HEK293 (cell line): ENCODE measurements at regions of chr2 and their contacts with region 1.

Region 1: GRCh38 chr2:219530048-219530963 is 13.3 kb downstream of the CHPF start:
- H3K4me3 ChIP-seq: no peak overlapping the region
- H3K27ac ChIP-seq: no peak overlapping the region
- H3K4me1 ChIP-seq: no peaks in the 10 kb centered on the region
- CTCF ChIP-seq: peak; percentile 95

Region 2: GRCh38 chr2:219160186-219161017 is 369.9 kb before region 1 on chr2 and contains the start of gene NHEJ1:
- CTCF ChIA-PET with region 1: interaction called, 18 read pairs
- POLR2A ChIA-PET with region 1: no interaction called
- H3K4me3 ChIP-seq: peak within 1 kb of the TSS; percentile 83
- H3K27ac ChIP-seq: peak within 1 kb of the TSS; percentile 97
- H3K4me1 ChIP-seq: peaks cover 5% of the 10 kb centered on the region; the same call in 1 of the 2 replicates
- CTCF ChIP-seq: peak; percentile 96

Region 3: GRCh38 chr2:219441451-219442255 is 88.7 kb before region 1 on chr2:
- CTCF ChIA-PET with region 1: interaction called, 24 read pairs
- POLR2A ChIA-PET with region 1: no interaction called
- H3K4me3 ChIP-seq: peak overlapping the region; percentile 55
- H3K27ac ChIP-seq: no peak overlapping the region; the same call in 1 of the 2 replicates
- H3K4me1 ChIP-seq: no peaks in the 10 kb centered on the region
- CTCF ChIP-seq: peak; percentile 44; the same call in 1 of the 2 replicates

Region 4: DNA sequence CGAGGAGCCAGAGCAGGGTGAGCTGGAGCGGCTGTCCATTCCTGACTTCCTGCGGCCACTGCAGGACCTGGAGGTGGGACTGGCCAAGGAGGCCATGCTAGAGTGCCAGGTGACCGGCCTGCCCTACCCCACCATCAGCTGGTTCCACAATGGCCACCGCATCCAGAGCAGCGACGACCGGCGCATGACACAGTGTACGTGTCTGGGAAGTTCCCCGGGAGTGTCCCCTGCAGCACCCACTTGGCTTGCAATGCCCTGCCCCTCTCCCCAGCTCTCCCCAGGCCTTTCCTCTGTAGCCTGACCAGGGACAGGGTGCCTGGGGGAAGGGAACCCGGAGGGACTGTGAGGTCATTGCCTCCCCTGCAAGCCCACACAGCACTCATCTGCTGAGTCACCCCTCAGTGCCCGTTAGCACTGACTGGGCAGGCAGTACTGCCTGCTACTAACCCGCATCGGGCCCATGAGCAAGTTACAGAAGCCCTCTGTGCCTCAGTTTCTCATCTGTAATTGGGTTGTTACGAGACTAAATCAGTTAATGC is 61.1 kb before region 1 on chr2:
- CTCF ChIA-PET with region 1: interaction called, 156 read pairs
- POLR2A ChIA-PET with region 1: interaction called, 3 read pairs
- H3K4me3 ChIP-seq: no peak overlapping the region
- H3K27ac ChIP-seq: no peak overlapping the region
- H3K4me1 ChIP-seq: no peaks in the 10 kb centered on the region
- CTCF ChIP-seq: no peak

Region 5: GRCh38 chr2:219484343-219485200 is 45.7 kb before region 1 on chr2:
- CTCF ChIA-PET with region 1: interaction called, 156 read pairs
- POLR2A ChIA-PET with region 1: no interaction called
- H3K4me3 ChIP-seq: no peak overlapping the region
- H3K27ac ChIP-seq: no peak overlapping the region
- H3K4me1 ChIP-seq: no peaks in the 10 kb centered on the region
- CTCF ChIP-seq: no peak

Region 6: GRCh38 chr2:219509780-219510511 is 20.4 kb before region 1 on chr2:
- CTCF ChIA-PET with region 1: interaction called, 137 read pairs
- POLR2A ChIA-PET with region 1: interaction called, 4 read pairs
- H3K4me3 ChIP-seq: peak overlapping the region; percentile 25
- H3K27ac ChIP-seq: no peak overlapping the region
- H3K4me1 ChIP-seq: peaks cover 2% of the 10 kb centered on the region
- CTCF ChIP-seq: peak; percentile 87

Region 7: GRCh38 chr2:219642465-219643080 is 112.3 kb after region 1 on chr2:
- CTCF ChIA-PET with region 1: interaction called, 12 read pairs
- POLR2A ChIA-PET with region 1: no interaction called
- H3K4me3 ChIP-seq: no peak overlapping the region
- H3K27ac ChIP-seq: no peak overlapping the region
- H3K4me1 ChIP-seq: no peaks in the 10 kb centered on the region
- CTCF ChIP-seq: peak; percentile 100